Cardiac septum (tissue), 1 donor: ENCODE measurements at regions of chr15 and their contacts with region 1.

Region 1: DNA sequence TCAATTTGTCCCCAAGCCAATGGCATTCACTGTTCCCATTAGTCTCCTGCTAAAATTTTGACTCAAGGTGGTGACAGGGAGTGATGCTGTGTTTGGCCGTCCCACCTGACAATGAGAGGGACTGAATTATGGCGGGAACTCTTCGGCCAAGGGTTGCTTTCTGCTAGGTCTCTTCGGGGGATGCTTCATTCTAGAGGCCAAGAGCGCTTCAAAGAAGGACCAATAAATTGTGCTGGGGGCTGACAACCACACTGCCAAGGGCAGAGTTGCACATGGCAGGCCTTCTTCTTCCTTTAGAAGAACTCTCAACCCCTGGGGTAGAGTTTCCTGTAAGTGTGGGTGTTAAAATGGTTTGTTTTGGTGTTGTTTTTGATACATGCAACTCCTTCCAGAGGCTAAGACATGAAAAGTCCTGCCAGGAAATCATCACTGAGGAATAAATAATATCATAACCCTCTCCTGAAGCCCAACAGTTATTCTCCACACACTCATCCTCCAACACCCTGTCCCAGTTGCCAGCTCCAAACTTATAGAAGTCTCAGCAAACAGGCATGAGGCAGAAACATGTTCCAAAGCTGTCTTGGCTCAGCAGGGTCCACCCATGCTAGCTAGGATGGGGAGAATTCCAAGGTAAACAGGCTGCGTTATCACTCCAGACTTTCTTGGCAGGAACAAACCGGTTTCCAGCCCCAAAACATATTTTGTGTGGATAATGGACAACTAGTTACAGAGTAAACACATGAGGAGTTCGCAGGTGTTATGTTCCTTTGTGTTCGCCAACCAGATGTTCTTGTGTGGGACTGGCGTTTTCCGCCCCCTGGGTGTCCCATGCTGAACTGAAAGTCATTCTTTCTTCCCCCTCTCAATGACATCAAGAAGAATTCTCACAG is 396.7 kb upstream of the RGMA start:
- DNase-seq: no peak

Region 2: GRCh38 chr15:93072411-93073394 is 413.0 kb before region 1 on chr15:
- intact Hi-C with region 1: loop called (anchors 5 kb)
- DNase-seq: peak; percentile 85

Region 3: DNA sequence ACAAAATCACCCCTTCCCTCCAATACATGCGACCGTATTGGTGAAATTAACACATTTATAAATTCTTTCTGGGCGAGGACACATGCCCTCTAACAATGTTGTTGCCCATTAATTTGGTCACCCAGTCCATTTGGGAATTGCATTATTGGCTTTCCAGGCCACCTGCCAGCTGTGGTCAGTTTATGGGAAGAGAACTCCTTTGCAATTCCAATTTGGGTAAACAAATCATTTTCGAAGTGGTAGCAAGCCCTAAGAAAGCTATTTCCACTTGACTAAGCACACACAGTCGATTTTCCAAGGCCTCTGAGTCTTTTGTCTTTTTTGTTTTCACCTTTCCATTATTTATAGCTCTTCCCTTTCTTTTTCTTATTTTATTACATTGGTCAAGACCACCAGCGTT is 34.4 kb before region 1 on chr15:
- intact Hi-C with region 1: no loop called
- DNase-seq: no peak

Region 4: DNA sequence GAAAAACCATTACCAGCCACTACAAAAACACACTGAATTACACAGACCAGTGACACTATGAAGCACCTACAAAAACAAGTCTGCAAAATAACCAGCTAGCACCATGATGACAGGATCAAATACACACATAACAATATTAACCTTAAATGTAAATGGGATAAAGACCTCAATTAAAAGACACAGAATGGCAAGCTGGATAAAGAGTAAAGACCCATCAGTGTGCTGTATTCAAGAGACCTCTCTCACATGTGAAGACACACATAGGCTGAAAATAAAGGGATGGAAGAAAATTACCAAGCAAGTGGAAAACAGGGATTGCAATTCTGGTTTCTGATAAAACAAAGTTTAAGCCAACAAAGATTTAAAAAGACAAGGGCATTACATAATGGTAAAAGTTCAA is 263.0 kb after region 1 on chr15:
- intact Hi-C with region 1: no loop called
- DNase-seq: no peak

Region 5: GRCh38 chr15:93865586-93865985 is 379.9 kb after region 1 on chr15:
- intact Hi-C with region 1: loop called (anchors 5 kb)
- DNase-seq: no peak